ENCODE measurements at regions of chr13 and their contacts with region 1.

Region 1: GRCh38 chr13:42039946-42040729 is 8.3 kb upstream of the DGKH start:
- DNase-seq: no peak
- ATAC-seq: peak; percentile 82
- H3K4me3 ChIP-seq: peak overlapping the region; percentile 42 to 71 (median 61)
- H3K27ac ChIP-seq: no peak overlapping the region
- H3K4me1 ChIP-seq: peaks cover 19% of the 10 kb centered on the region
- H3K27me3 ChIP-seq: peaks cover 8 to 44% of the 10 kb centered on the region in 2 experiments; a peak in 4 of 5 replicates
- CTCF ChIP-seq: no peak
- EP300 ChIP-seq: no peak
- POLR2A ChIP-seq: no peak
- RAD21 ChIP-seq: no peak

Region 2: GRCh38 chr13:41668130-41668757 is 371.9 kb before region 1 on chr13:
- CTCF ChIA-PET with region 1: no interaction called
- POLR2A ChIA-PET with region 1: no interaction called
- in situ Hi-C with region 1: no loop called
- intact Hi-C with region 1: loop called (anchors 5 kb)
- DNase-seq: peak; percentile 96
- ATAC-seq: peak; percentile 100
- H3K4me3 ChIP-seq: no peak overlapping the region
- H3K27ac ChIP-seq: peak overlapping the region; percentile 36
- H3K4me1 ChIP-seq: peaks cover 15% of the 10 kb centered on the region
- H3K27me3 ChIP-seq: no peaks in the 10 kb centered on the region
- CTCF ChIP-seq: peak; percentile 88
- EP300 ChIP-seq: peak in 1 of 2 experiments; percentile 56; a peak in 2 of 4 replicates
- POLR2A ChIP-seq: no peak
- RAD21 ChIP-seq: peak; percentile 71

Region 3: GRCh38 chr13:41905600-41906254 is 134.4 kb before region 1 on chr13:
- CTCF ChIA-PET with region 1: no interaction called
- POLR2A ChIA-PET with region 1: no interaction called
- in situ Hi-C with region 1: no loop called
- intact Hi-C with region 1: loop called (anchors 2 kb)
- DNase-seq: peak; percentile 28
- ATAC-seq: peak; percentile 93
- H3K4me3 ChIP-seq: no peak overlapping the region
- H3K27ac ChIP-seq: no peak overlapping the region
- H3K4me1 ChIP-seq: peaks cover 9% of the 10 kb centered on the region
- H3K27me3 ChIP-seq: no peaks in the 10 kb centered on the region
- CTCF ChIP-seq: peak; percentile 40
- EP300 ChIP-seq: no peak
- POLR2A ChIP-seq: no peak
- RAD21 ChIP-seq: no peak

Region 4: DNA sequence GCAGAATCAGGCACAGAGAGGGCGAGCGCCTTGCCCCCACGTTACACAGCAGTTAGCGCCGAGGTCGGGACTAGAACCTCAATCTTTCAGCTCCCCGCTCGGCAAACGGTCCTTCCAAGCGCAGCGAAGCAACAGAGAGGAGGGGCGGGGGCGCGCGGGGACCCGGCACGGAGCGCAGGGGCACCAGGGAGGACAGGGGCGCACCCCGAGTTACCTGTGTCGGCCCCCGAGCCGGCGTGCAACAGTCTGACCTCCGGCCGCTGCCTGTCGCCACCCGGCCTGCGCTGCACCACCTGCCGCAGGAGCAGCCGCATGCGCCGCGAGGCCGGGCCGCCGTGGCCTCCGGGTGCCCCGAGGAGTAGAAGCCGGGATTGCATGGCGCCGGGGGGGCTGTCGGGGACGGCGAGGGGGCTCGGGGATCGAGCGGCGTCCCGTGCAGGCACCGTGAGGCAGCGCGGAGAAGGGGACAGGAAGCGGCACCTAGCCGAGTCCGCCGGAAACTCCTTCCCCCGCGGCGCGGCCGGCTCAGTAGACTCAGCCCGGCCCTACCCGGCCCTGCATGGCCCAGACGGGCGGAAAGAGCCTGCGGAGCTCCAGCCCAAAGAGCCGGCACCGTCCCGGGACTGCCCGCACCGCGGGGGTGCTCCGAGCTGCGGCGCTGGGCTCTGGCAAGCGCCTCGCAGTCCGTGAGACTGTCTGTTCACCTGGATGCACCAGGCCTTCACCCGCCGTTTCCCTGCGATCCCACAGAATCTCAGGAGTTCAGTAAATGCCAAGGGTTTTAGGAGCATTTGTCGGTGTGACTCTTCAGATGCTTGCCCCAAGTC is 79.3 kb before region 1 on chr13 and contains the start of gene VWA8:
- CTCF ChIA-PET with region 1: no interaction called
- POLR2A ChIA-PET with region 1: no interaction called
- in situ Hi-C with region 1: no loop called
- intact Hi-C with region 1: loop called (anchors 2 kb)
- DNase-seq: peak; percentile 59
- ATAC-seq: peak; percentile 96
- H3K4me3 ChIP-seq: peak within 1 kb of the TSS; percentile 78 to 96 (median 88)
- H3K27ac ChIP-seq: peak within 1 kb of the TSS; percentile 81
- H3K4me1 ChIP-seq: peaks cover 49% of the 10 kb centered on the region
- H3K27me3 ChIP-seq: peaks cover 0 to 3% of the 10 kb centered on the region in 2 experiments; a peak in 1 of 5 replicates
- CTCF ChIP-seq: no peak
- EP300 ChIP-seq: no peak
- POLR2A ChIP-seq: peak; percentile 85 to 88
- RAD21 ChIP-seq: no peak
- total RNA-seq, gene VWA8: 16.0 and 17.3 TPM in 2 replicates

Region 5: GRCh38 chr13:42094516-42095040 is 54.4 kb after region 1 on chr13:
- CTCF ChIA-PET with region 1: no interaction called
- POLR2A ChIA-PET with region 1: no interaction called
- in situ Hi-C with region 1: no loop called
- intact Hi-C with region 1: no loop called
- DNase-seq: no peak
- ATAC-seq: no peak
- H3K4me3 ChIP-seq: no peak overlapping the region
- H3K27ac ChIP-seq: no peak overlapping the region
- H3K4me1 ChIP-seq: no peaks in the 10 kb centered on the region
- H3K27me3 ChIP-seq: no peaks in the 10 kb centered on the region; a peak in 1 of 5 replicates
- CTCF ChIP-seq: no peak
- EP300 ChIP-seq: no peak
- POLR2A ChIP-seq: no peak
- RAD21 ChIP-seq: no peak